A549 (cell line): ENCODE measurements at regions of chr12 and their contacts with region 1.

Region 1: DNA sequence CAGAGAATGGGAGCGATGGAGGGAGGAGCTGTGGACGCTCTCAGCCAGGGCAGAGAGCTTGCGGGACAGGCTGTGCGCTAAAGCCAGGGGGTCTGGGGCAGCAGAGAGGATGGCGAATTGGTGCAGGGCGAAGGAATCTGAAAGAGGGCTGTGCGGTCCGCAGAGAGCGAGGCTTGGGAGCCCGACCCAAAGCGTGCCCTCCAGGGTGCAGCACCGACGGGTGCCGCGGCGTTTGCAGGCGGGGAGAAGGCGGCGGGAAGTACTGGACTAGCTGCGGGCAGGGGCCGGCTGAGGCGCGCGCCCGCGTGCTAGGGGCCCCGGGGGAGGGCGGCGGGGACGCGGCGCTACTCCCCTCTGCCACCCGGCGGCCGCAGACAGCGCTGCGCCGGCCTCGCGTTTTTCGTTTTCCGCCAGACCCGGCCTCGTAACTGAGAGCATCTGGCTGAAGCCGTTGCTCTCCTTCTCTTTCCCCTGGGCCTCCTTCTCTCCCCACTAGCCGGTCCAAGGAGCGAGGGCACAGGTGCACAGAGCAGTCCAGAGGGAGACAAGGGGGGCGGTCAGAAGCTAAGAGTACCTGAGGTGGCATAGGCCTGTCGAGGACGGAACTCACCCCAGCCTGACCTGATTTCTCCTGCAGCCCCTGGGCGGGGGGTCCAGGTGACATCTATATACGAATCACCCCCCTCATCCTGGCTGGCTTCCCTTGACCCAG is 24.9 kb downstream of the SLC6A12 start:
- DNase-seq: peak; percentile 58 to 85
- ATAC-seq: peak; percentile 82 to 91
- H3K4me3 ChIP-seq: peak overlapping the region; percentile 56
- H3K27ac ChIP-seq: peak overlapping the region; percentile 73 to 85
- H3K4me1 ChIP-seq: no peaks in the 10 kb centered on the region
- CTCF ChIP-seq: peak; percentile 74
- EP300 ChIP-seq: no peak
- POLR2A ChIP-seq: no peak
- RAD21 ChIP-seq: peak; percentile 44 to 67; a peak in 4 of 5 replicates

Region 2: DNA sequence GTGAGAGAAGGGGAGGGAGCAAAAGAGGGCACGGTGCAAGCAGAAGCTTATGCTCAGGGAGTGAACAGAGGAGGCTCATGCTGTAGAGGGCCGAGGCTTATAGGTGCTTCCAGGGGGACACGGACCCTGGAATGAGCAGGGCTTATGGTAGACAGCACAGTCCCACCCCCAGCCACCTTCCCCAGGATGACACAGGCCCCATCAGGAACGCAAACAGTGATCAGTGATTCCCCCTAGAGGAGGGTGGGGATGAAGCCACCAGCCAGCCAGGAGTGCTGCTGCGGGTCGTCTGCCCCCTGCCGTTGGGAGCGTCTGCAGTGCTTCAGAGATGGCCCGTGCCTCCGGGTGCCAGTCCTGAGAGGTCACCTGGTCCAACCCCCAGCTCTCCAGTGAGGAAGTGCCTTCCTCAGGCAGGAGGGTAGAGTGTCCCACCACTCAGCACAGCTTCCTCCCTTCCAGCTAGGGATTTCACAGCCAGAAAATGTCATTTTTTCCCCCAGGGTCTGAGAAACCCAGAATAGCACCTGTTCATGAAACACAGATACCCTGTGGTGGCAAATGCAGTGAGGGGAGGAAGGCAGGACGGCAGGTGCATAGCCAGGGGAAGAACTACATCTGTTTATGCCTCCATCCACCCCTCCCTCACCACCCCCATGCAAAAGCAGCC is 35.9 kb before region 1 on chr12:
- CTCF ChIA-PET with region 1: interaction called, 14 read pairs
- POLR2A ChIA-PET with region 1: no interaction called
- DNase-seq: peak; percentile 79 to 90
- ATAC-seq: peak; percentile 89 to 98
- H3K4me3 ChIP-seq: no peak overlapping the region
- H3K27ac ChIP-seq: no peak overlapping the region
- H3K4me1 ChIP-seq: no peaks in the 10 kb centered on the region
- CTCF ChIP-seq: peak; percentile 76
- EP300 ChIP-seq: no peak
- POLR2A ChIP-seq: no peak
- RAD21 ChIP-seq: peak; percentile 68 to 80

Region 3: DNA sequence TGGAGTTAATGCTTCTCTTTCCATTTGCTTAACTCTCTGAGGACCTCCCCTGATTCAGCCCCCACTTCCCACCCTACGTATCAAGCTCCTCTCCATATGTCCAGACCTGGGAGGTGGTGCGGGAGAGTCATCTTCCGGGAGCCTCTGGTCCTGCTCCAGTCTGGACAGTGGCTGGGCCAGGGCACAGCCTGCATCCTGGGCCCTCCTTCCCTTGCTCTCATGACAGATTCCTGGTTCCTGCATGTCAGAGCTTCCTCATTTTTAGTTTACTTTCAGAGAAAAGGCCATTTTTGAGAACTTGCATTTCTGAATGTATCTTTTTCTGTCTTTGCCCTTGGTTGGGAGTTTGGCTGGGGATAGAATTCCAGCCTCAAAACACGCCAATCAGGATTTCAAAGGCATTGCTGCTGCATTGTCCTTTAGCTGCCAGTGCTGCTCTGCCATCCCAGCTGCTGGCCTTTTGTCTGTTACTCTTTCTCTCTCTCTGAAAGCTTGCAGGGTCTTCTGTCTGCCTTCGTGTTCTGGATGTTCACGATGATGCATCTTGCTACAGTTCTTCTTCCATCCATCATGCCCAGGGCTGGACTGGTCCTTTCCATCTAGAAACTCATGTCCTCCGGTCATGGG is 29.8 kb before region 1 on chr12:
- CTCF ChIA-PET with region 1: interaction called, 13 read pairs
- POLR2A ChIA-PET with region 1: no interaction called
- DNase-seq: no peak
- ATAC-seq: no peak
- H3K4me3 ChIP-seq: no peak overlapping the region
- H3K27ac ChIP-seq: no peak overlapping the region
- H3K4me1 ChIP-seq: no peaks in the 10 kb centered on the region
- CTCF ChIP-seq: no peak
- EP300 ChIP-seq: no peak
- POLR2A ChIP-seq: no peak
- RAD21 ChIP-seq: no peak

Region 4: DNA sequence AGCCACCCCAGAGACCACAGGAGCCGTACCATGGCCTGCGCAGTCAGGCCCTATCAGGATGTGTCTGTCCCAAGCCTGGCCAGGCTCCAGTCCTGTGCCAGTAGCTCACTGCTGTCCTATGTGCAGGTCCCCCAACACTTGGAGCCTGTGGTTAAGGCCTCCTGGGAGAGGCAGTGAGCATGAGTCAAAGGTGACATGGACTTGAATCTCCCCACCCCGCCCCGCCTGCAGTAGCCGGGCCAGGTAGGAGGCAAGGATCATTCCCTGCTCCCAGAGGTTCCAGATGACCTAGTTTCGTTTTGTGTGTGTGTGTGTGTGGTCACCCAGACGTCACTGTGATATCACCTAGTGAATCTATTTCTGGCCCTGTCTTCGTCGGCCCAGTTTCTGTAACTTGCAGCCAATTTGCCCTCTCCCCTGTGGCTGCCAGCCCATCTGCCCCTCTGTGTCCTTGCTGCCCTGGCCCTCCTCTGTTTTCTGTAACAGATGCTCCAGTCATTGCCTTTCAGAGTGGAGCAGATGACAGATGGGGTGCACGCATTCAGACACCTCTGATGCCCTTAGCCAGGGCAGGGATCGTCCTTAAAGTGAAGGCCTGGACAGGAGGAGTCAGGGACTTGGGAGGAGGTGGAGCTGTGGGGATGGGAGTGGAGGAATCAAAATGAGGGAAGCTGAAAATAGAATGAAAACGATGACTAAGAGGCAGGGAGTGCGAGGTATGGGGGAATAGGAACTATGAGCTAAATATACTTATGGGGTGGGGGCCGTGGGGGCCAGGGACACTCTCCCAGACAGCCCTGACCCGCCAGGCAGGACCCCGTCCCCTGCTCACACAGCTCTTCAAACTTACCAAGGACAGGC is 12.5 kb before region 1 on chr12:
- CTCF ChIA-PET with region 1: interaction called, 24 read pairs
- POLR2A ChIA-PET with region 1: no interaction called
- DNase-seq: peak in 1 of 2 experiments; percentile 36
- ATAC-seq: peak; percentile 38 to 56; a peak in 5 of 6 replicates
- H3K4me3 ChIP-seq: no peak overlapping the region
- H3K27ac ChIP-seq: peak overlapping the region in 1 of 2 experiments; percentile 61; a peak in 2 of 6 replicates
- H3K4me1 ChIP-seq: peaks cover 24% of the 10 kb centered on the region
- CTCF ChIP-seq: no peak
- EP300 ChIP-seq: no peak
- POLR2A ChIP-seq: no peak
- RAD21 ChIP-seq: no peak

Region 5: DNA sequence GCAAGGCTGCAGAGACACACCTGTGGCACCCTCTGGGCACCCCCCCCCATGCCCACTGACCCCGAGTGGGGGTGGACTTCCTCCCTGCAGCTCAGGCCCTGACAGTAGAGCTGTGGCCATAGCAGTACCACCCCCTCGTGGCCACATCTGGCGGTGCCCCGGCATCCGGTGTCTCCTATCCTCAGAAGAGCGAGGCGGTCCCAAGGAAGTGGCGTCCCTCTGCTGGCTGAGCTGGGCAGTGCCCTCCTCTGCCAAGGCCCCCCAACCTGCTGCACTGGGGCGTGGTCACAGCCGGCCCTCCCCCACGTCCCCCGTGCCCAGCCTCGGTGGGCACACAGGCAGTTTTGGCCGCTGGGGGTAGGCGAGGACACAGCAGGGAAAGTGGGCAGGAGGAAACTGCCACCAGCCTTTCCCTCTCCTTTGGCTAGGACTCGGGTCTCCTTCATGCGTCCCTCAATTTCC is 30.9 kb after region 1 on chr12:
- CTCF ChIA-PET with region 1: interaction called, 20 read pairs
- POLR2A ChIA-PET with region 1: no interaction called
- DNase-seq: peak; percentile 84 to 88
- ATAC-seq: peak; percentile 94 to 99
- H3K4me3 ChIP-seq: no peak overlapping the region
- H3K27ac ChIP-seq: peak overlapping the region in 1 of 2 experiments; percentile 60; a peak in 2 of 6 replicates
- H3K4me1 ChIP-seq: no peaks in the 10 kb centered on the region
- CTCF ChIP-seq: peak; percentile 70
- EP300 ChIP-seq: no peak
- POLR2A ChIP-seq: no peak
- RAD21 ChIP-seq: peak; percentile 76 to 79

Region 6: DNA sequence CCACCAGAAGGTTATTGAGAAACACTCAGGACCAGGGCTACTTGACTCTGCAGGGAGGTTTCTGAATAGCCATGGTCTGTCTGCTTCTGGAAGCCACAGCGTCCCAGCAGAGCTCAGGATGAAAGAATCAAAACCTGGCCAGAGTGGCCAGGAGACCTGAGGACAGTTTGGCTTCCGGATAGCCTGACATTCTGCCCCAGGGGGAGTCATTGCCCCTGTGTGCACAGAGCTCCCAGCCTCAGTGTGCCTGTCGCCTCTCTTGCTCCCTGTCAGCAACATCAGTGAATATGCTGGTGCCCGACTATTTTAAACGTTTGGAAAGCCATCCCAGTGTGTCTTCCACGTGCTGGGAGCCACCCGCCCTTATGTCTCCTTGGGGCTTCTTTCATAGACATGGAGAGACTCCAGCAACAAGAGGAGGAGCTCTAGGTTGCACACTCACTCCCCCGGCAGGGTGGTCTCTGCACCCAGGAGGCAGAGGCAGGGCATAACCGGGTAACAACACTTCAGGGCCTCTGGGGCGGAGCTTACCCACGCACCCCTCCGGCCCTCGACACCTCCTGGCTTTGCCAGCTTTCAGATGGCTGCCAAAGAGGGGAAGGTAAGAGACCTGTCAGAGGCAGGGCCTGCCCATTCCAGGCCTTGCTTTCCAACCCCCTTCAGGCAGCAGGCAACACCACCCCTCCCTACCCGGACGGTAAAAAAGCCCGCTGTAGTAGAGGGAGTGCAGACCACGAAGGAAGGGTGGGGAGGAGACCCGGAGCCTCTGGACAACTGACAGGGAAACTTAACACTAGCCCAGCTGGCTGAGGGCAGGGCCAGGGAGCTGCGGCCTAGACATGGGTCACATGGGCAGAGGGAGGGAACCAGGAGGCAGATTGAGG is 43.9 kb after region 1 on chr12:
- CTCF ChIA-PET with region 1: no interaction called
- POLR2A ChIA-PET with region 1: no interaction called
- DNase-seq: no peak
- ATAC-seq: no peak
- H3K4me3 ChIP-seq: no peak overlapping the region
- H3K27ac ChIP-seq: no peak overlapping the region
- H3K4me1 ChIP-seq: 0 out of 3 replicates have a peak, but pooled peaks cover 4% of the 10 kb centered on the region
- CTCF ChIP-seq: no peak
- EP300 ChIP-seq: no peak
- POLR2A ChIP-seq: no peak
- RAD21 ChIP-seq: no peak

Region 7: GRCh38 chr12:263574-263973 is 74.5 kb after region 1 on chr12:
- CTCF ChIA-PET with region 1: no interaction called
- POLR2A ChIA-PET with region 1: no interaction called
- DNase-seq: peak in 1 of 2 experiments; percentile 20
- ATAC-seq: peak; percentile 8 to 66; a peak in 4 of 6 replicates
- H3K4me3 ChIP-seq: no peak overlapping the region
- H3K27ac ChIP-seq: no peak overlapping the region
- H3K4me1 ChIP-seq: no peaks in the 10 kb centered on the region; the same call in 2 of the 3 replicates
- CTCF ChIP-seq: no peak
- EP300 ChIP-seq: no peak
- POLR2A ChIP-seq: no peak
- RAD21 ChIP-seq: no peak

Region 8: GRCh38 chr12:292186-292585 is 103.1 kb after region 1 on chr12:
- CTCF ChIA-PET with region 1: no interaction called
- POLR2A ChIA-PET with region 1: no interaction called
- DNase-seq: no peak
- ATAC-seq: no peak
- H3K4me3 ChIP-seq: no peak overlapping the region
- H3K27ac ChIP-seq: no peak overlapping the region
- H3K4me1 ChIP-seq: no peaks in the 10 kb centered on the region; the same call in 2 of the 3 replicates
- CTCF ChIP-seq: no peak
- EP300 ChIP-seq: no peak
- POLR2A ChIP-seq: no peak
- RAD21 ChIP-seq: no peak

Region 9: GRCh38 chr12:480831-481816 is 292.1 kb after region 1 on chr12:
- CTCF ChIA-PET with region 1: no interaction called
- POLR2A ChIA-PET with region 1: no interaction called
- DNase-seq: no peak
- ATAC-seq: no peak; a peak in 2 of 6 replicates
- H3K4me3 ChIP-seq: no peak overlapping the region
- H3K27ac ChIP-seq: no peak overlapping the region
- H3K4me1 ChIP-seq: no peaks in the 10 kb centered on the region
- CTCF ChIP-seq: no peak
- EP300 ChIP-seq: no peak
- POLR2A ChIP-seq: no peak
- RAD21 ChIP-seq: no peak